Vagina (tissue), 2 donors: ENCODE measurements at regions of chr16 and their contacts with region 1.

Region 1: DNA sequence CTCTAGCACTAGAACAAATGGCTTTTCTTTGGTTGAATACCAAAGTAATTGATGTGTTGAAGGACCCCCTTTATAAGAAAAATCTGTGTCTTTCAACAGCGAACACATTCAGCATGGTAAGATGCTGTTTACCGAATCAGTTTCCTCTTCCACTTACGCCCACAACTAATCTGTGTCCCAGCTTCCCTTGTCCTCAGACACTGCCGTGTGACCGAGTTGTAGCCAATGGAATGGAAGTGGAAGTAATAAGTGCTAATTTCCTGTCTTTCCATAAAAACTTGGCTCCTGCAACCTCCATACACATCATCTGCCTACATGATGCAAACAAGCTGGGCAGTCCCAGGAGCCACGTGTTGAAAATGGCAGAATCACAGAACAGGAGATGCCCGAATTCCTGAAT is 10.4 kb downstream of the CDIPT start:
- DNase-seq: no peak
- H3K4me3 ChIP-seq: no peak overlapping the region
- H3K27ac ChIP-seq: no peak overlapping the region
- H3K4me1 ChIP-seq: peaks cover 19% of the 10 kb centered on the region
- H3K27me3 ChIP-seq: no peaks in the 10 kb centered on the region
- CTCF ChIP-seq: no peak
- POLR2A ChIP-seq: no peak

Region 2: GRCh38 chr16:29790183-29790952 is 62.3 kb before region 1 on chr16 and contains the start of gene KIF22:
- intact Hi-C with region 1: no loop called
- DNase-seq: peak in 1 of 2 donors; percentile 97
- H3K4me3 ChIP-seq: peak within 1 kb of the TSS; percentile 69
- H3K27ac ChIP-seq: peak within 1 kb of the TSS; percentile 91
- H3K4me1 ChIP-seq: peaks cover 28% of the 10 kb centered on the region
- H3K27me3 ChIP-seq: no peaks in the 10 kb centered on the region
- CTCF ChIP-seq: peak; percentile 63 to 78 (median 67)
- POLR2A ChIP-seq: peak in 1 of 2 donors; percentile 64
- total RNA-seq, gene KIF22: 18.9 TPM

Region 3: GRCh38 chr16:29951625-29952365 is 99.1 kb after region 1 on chr16:
- intact Hi-C with region 1: loop called (anchors 10 kb)
- DNase-seq: no peak
- H3K4me3 ChIP-seq: no peak overlapping the region
- H3K27ac ChIP-seq: no peak overlapping the region
- H3K4me1 ChIP-seq: no peaks in the 10 kb centered on the region
- H3K27me3 ChIP-seq: no peaks in the 10 kb centered on the region
- CTCF ChIP-seq: no peak
- POLR2A ChIP-seq: no peak